Activated B cell treated with CpG ODN at 0.5 μM for 24 hours (primary cell): ENCODE measurements at regions of chr12 and their contacts with region 1.

Region 1: DNA sequence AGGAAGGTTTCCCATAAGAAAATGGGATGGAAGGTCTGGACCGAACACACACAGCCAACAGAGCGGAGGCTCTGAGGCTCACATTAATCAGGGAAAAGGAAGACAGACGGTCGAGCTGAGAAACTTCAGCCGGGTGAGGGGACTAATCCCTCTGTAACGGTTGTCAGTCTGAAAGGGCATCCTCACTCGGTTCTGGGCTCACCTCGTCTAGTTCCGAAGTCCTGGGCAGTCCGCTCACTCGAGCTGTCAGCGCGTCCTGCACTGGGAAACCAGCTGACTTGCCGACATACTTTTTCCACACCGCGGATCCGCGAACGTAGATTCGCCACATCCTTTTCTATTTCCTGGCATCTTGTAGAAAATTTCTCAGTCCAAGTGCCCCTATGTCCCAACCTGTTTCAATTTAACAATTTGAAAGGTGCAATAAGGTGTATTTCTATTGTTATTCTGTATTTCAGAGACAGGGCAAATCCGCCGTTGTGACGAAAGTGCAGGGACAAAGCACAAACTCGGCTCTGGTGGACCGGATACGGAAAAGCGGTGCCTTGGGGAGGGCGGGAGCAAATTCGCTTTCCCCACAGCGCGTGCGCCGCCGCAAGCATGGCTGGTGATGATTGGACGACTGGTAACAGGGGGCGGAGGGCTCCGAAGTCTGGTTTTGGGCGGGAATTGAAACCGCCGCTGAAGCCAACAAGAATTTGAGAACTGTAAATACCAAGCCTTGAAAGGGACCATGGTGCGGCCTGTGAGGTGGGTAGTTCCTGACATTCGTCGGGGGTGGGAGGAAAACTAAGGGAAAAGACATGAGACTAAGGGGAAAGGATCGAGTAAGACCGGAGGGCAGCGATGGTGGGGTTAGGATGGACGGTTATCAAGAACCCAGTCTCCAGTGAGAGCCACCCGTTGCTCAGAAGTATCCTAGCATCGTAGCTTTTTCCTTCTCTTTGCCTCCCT is at the start of gene RAD51AP1:
- DNase-seq: peak; percentile 86
- ATAC-seq: peak; percentile 98
- H3K4me3 Mint-ChIP-seq: peak within 1 kb of the TSS; percentile 91
- H3K27ac Mint-ChIP-seq: peak within 1 kb of the TSS; percentile 99
- H3K4me1 Mint-ChIP-seq: peaks cover 31% of the 10 kb centered on the region
- H3K27me3 Mint-ChIP-seq: no peaks in the 10 kb centered on the region
- CTCF ChIP-seq: no peak
- total RNA-seq, gene RAD51AP1: 5.6 and 5.9 TPM in 2 replicates

Region 2: GRCh38 chr12:3752741-3753486 is 785.6 kb before region 1 on chr12 and contains the start of gene CRACR2A:
- CTCF ChIA-PET with region 1: no interaction called
- POLR2A ChIA-PET with region 1: no interaction called
- intact Hi-C with region 1: loop called (anchors 2 kb)
- DNase-seq: peak; percentile 85
- ATAC-seq: peak; percentile 87
- H3K4me3 Mint-ChIP-seq: peak within 1 kb of the TSS; percentile 88
- H3K27ac Mint-ChIP-seq: peak within 1 kb of the TSS; percentile 93
- H3K4me1 Mint-ChIP-seq: peaks cover 25% of the 10 kb centered on the region
- H3K27me3 Mint-ChIP-seq: no peaks in the 10 kb centered on the region
- CTCF ChIP-seq: no peak
- total RNA-seq, gene CRACR2A: 22.7 and 25.8 TPM in 2 replicates

Region 3: DNA sequence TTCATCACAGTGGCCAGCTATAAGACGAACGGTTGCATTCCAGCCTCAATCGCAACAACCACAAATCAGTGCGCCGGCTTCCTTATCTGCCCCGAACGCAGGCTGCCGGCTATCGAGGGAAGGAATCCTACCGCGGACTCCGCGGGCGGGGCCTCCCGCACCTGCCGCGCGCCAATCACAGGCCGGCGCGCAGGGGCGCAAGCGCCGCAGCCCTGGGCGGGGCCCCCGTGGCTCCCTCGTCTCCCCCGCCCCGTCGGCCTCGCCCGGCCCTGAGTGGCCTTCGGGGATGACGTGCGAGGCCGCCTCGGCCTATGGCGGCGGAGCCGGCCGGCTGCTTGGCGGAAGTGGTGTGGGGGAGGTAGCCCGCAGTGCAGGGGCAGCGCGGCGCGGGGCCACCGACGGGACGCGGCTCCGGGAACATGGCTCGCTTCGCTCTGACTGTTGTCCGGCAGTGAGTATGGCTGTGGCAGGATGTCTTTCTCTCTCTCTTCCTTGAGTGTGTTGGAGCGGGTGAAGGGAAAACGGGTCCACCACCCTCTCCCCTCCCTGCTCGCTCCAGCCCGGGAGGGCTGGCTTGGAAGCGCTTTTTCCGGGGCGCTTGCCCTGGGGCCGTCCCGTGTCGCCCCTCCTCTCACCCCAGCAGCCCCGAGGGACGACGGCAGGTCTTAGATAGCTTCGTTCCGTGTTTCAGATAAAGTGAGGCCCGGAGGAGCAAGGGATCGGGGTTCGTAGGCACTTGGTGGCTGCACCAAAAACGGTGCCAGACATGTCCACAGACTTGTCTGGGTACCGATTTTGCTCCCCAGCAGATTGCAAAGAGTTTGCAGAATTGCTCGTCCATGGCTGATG is 217.4 kb before region 1 on chr12 and contains the start of gene TIGAR:
- CTCF ChIA-PET with region 1: no interaction called
- POLR2A ChIA-PET with region 1: no interaction called
- intact Hi-C with region 1: loop called (anchors 1 kb)
- DNase-seq: peak; percentile 94
- ATAC-seq: peak; percentile 97
- H3K4me3 Mint-ChIP-seq: peak within 1 kb of the TSS; percentile 95
- H3K27ac Mint-ChIP-seq: peak within 1 kb of the TSS; percentile 92
- H3K4me1 Mint-ChIP-seq: peaks cover 34% of the 10 kb centered on the region
- H3K27me3 Mint-ChIP-seq: no peaks in the 10 kb centered on the region
- CTCF ChIP-seq: no peak
- total RNA-seq, gene TIGAR: 10.0 and 10.2 TPM in 2 replicates